ENCODE measurements at regions of chr3 and their contacts with region 1.

Region 1: GRCh38 chr3:188154014-188154808 is at the start of gene LPP:
- DNase-seq: peak; percentile 60 to 94 (median 76)
- ATAC-seq: peak; percentile 83
- H3K4me3 ChIP-seq: peak within 1 kb of the TSS; percentile 87
- H3K4me3 Mint-ChIP-seq: peak within 1 kb of the TSS; percentile 96
- H3K27ac ChIP-seq: peak within 1 kb of the TSS; percentile 76 to 85
- H3K27ac Mint-ChIP-seq: peak within 1 kb of the TSS; percentile 91
- H3K4me1 ChIP-seq: peaks cover 46% of the 10 kb centered on the region
- H3K4me1 Mint-ChIP-seq: peaks cover 57% of the 10 kb centered on the region
- H3K27me3 ChIP-seq: no peaks in the 10 kb centered on the region
- H3K27me3 Mint-ChIP-seq: no peaks in the 10 kb centered on the region
- CTCF ChIP-seq: no peak
- total RNA-seq, gene LPP: 45.6 to 45.9 TPM

Region 2: DNA sequence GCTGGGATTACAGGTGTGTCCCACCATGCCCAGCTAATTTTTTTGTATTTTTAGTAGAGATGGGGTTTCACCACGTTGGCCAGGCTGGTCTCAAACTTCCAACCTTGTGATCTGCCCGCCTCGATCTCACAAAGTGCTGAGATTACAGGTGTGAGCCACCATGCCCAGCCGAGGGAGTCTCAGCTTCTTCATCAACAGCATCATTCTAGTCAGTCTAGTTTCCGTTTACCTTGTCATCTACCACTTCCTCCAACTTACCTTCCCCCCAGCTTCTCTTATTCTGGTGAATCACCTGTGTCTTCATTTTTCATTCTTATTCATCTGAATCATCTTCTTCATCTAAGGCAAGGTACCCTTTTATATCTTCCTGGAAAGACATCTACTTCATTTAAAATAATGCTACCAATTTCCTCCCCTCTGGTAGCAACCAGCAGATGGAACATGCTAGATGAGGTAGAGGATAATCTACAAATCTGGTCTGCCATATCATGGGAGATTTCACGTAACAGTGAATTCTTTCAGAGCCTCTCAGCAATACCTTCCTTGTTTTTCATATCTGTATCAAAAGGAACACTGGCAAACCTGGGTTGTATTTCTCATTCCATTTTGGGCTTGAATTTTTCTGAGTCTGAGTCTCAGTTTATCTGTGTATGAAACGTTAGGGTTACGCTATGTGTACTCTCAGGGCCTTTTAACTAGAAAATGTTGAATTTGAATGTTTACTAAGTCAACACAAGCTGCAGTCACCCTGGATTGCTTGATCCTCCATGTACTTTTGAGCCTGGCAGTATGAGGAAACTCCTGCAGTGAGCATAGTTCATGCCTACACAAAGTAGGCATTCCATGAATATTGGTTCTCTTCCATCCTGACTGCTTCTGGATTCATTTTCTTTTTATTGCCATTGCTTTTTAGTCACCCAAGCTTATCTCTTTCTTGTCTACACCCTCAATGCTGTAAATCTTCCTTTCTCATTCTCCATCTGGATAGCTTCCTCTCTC is 16.5 kb after region 1 on chr3:
- CTCF ChIA-PET with region 1: interaction called, 6 read pairs
- POLR2A ChIA-PET with region 1: interaction called, 7 read pairs
- intact Hi-C with region 1: loop called in 1 of 2 experiments (anchors 2 kb)
- DNase-seq: peak in 10 of 14 experiments; percentile 16 to 76 (median 44)
- ATAC-seq: peak; percentile 99
- H3K4me3 ChIP-seq: no peak overlapping the region
- H3K4me3 Mint-ChIP-seq: peak overlapping the region; percentile 2
- H3K27ac ChIP-seq: no peak overlapping the region
- H3K27ac Mint-ChIP-seq: peak overlapping the region; percentile 75
- H3K4me1 ChIP-seq: peaks cover 23% of the 10 kb centered on the region
- H3K4me1 Mint-ChIP-seq: peaks cover 37% of the 10 kb centered on the region
- H3K27me3 ChIP-seq: no peaks in the 10 kb centered on the region
- H3K27me3 Mint-ChIP-seq: no peaks in the 10 kb centered on the region
- CTCF ChIP-seq: no peak

Region 3: DNA sequence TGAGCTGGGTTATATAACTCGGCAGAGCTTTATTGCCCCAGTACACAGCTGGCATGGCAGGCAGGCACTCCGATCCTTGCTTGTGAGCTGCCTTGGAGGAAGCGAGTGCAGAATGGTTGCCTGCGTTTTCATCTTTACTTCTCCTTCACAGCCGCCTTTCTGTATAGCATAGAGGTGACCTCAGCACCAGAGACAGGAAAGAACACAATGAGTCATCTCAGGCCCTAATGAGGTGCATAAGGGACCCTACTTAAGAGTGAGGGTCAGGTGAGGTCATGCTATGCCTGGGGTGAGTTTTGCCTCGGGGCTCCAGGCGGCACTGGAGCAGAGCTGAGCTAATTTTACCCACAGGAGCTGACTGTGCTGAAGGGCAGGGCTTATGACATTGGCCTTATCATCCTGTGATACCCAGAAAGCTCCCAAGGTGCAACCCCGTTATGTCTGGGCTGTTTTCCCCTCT is 43.2 kb after region 1 on chr3:
- CTCF ChIA-PET with region 1: no interaction called
- POLR2A ChIA-PET with region 1: no interaction called
- intact Hi-C with region 1: no loop called
- DNase-seq: no peak
- ATAC-seq: no peak
- H3K4me3 ChIP-seq: no peak overlapping the region
- H3K4me3 Mint-ChIP-seq: no peak overlapping the region
- H3K27ac ChIP-seq: no peak overlapping the region
- H3K27ac Mint-ChIP-seq: no peak overlapping the region
- H3K4me1 ChIP-seq: peaks cover 6% of the 10 kb centered on the region
- H3K4me1 Mint-ChIP-seq: peaks cover 30% of the 10 kb centered on the region
- H3K27me3 ChIP-seq: no peaks in the 10 kb centered on the region
- H3K27me3 Mint-ChIP-seq: no peaks in the 10 kb centered on the region
- CTCF ChIP-seq: no peak

Region 4: DNA sequence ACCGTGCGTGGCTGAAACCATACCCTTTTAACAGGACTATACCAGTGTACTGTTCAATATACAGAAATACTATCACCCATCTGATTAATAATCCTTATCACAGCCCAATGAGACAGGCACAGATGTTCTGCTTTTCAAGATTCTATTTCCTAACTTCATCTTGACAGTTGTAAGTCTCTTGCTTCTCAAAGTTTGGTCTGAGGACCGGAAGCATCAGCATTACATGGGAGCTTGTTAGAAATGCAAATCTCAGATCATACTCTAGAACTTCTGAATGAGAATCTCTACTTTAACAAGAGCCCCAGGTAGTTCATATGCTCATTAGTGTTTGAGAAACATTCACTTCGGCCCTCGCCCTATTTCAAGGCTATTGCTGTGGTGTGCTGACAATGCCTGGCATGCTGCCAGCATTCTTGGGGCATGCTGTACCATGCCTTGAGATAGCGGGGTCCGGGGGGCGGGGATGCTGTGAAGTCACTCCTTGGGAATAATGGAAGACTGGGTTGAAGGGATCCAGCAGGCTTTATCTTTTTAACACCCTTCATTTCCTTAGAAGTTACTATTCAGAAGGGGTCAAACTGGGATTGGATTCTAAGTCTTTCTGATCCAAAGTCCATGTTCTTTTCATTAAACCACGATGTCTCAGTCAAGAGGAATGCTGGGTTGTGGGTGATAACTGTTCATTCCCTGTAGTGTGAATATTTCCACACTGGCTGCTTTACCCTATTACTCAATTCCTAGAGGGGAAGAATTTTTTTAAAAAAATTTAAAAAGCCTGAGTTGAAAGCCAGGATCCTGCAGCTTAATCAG is 194.4 kb after region 1 on chr3:
- CTCF ChIA-PET with region 1: no interaction called
- POLR2A ChIA-PET with region 1: no interaction called
- intact Hi-C with region 1: loop called in 1 of 2 experiments (anchors 10 kb)
- DNase-seq: no peak
- ATAC-seq: no peak
- H3K4me3 ChIP-seq: no peak overlapping the region
- H3K4me3 Mint-ChIP-seq: no peak overlapping the region
- H3K27ac ChIP-seq: no peak overlapping the region
- H3K27ac Mint-ChIP-seq: no peak overlapping the region
- H3K4me1 ChIP-seq: no peaks in the 10 kb centered on the region
- H3K4me1 Mint-ChIP-seq: no peaks in the 10 kb centered on the region
- H3K27me3 ChIP-seq: no peaks in the 10 kb centered on the region
- H3K27me3 Mint-ChIP-seq: no peaks in the 10 kb centered on the region
- CTCF ChIP-seq: no peak

Region 5: DNA sequence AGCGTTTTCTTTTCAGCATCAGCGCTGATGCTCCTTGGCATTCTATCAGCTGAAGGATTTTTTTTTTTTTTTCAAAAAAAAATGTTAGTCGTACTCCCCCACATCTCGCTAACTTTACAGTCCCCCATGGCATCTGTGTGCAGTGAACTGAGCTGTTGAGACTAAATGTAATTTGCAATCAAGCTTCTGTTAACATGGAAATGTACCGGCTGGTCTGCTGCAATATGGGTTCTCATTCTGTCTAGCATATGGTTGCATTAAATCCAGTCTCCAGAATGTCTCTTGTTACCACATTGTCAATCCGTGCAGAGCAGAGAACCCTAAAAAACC is 985.4 kb after region 1 on chr3:
- CTCF ChIA-PET with region 1: no interaction called
- POLR2A ChIA-PET with region 1: no interaction called
- intact Hi-C with region 1: loop called in 1 of 2 experiments (anchors 5 kb)
- DNase-seq: no peak
- ATAC-seq: no peak
- H3K4me3 ChIP-seq: no peak overlapping the region
- H3K4me3 Mint-ChIP-seq: no peak overlapping the region
- H3K27ac ChIP-seq: no peak overlapping the region
- H3K27ac Mint-ChIP-seq: no peak overlapping the region
- H3K4me1 ChIP-seq: peaks cover 4% of the 10 kb centered on the region
- H3K4me1 Mint-ChIP-seq: peaks cover 7% of the 10 kb centered on the region
- H3K27me3 ChIP-seq: no peaks in the 10 kb centered on the region
- H3K27me3 Mint-ChIP-seq: no peaks in the 10 kb centered on the region
- CTCF ChIP-seq: no peak